ENCODE measurements at regions of chr2 and their contacts with region 1.

Region 1: GRCh38 chr2:148644883-148645538 is 460 bp downstream of the EPC2 start:
- DNase-seq: peak; percentile 92
- H3K4me3 ChIP-seq: peak overlapping the region; percentile 68 to 92
- H3K27ac ChIP-seq: peak overlapping the region; percentile 99 to 100
- H3K4me1 ChIP-seq: peaks cover 4% of the 10 kb centered on the region
- H3K27me3 ChIP-seq: no peaks in the 10 kb centered on the region
- CTCF ChIP-seq: peak in 2 of 4 experiments; percentile 60 to 64
- POLR2A ChIP-seq: no peak

Region 2: DNA sequence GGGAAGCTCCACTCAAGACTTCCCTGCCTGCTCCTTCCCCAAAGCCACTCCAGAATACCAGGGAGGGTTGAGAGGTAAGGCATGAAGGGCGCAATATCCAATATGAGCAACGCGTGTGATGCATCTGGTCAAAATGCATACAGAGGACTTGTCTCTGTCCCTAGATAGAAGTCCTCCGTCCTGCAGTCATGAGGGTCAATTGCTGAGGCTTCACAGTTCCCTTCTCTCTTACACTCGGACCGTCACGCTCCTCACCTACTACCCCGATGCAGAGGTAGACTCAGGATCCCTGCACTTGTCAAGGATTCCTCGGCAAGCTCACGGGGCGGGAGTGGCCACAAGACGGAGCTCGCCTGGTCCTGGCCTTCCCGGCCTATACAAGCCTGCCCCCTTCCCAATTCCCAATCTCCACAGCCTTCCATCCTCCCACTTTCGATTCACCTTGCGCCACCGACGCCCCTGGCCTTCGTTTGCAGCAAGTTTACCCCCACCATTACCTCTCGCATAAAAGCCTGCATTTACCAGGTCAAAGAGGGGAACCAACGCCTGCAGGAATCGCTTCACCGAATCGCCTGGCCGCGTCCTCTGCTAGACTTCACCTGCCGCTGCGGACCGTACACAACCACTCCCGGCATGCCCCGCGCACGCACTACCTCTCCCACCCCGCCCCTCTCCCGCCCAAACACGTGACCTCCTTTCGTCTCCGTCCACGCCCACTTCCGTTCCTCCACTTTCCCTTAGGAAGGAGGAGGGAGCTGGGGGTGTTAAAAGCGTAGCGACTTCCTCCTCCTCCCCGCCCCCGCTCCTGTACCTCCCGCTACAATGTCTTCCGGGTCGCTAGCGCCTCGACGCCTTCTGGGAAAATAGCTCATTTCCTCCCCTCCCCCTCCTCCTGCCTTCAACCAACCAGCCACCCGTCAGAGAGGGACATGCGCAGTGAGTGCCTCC is 624.6 kb before region 1 on chr2 and contains the start of gene ORC4:
- intact Hi-C with region 1: loop called (anchors 10 kb)
- DNase-seq: peak; percentile 100
- H3K4me3 ChIP-seq: peak within 1 kb of the TSS; percentile 62 to 79
- H3K27ac ChIP-seq: peak within 1 kb of the TSS; percentile 95
- H3K4me1 ChIP-seq: peaks cover 4% of the 10 kb centered on the region
- H3K27me3 ChIP-seq: no peaks in the 10 kb centered on the region
- CTCF ChIP-seq: peak in 3 of 4 experiments; percentile 36 to 48 (median 37)
- POLR2A ChIP-seq: peak; percentile 74
- total RNA-seq, gene ORC4: 62.0 to 88.3 TPM

Region 3: DNA sequence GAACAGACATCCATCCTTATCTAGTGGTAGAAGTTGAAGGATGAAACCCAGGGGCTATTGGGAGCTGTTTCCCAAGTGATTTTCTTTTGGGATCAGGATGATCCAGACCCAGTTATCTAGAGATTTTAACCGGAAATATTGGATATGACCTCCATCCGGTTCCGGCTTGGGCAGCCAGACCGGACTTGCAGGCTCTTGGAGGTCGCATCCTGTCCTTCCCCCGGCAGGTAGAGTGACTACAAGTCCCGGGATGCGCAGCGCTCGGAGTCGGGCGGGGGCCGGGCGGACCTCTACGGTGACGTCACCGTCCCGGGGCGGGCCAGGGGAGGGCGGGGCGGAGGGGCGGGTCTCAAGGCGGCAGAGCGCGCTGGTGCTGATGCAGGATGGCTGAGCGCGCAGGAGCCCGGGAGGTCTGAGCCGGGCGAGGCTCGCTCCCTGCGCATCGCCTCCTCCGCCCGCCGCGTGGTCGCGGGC is 229.9 kb after region 1 on chr2 and contains the start of gene KIF5C:
- intact Hi-C with region 1: loop called (anchors 10 kb)
- DNase-seq: peak; percentile 91
- H3K4me3 ChIP-seq: peak within 1 kb of the TSS; percentile 58 to 74
- H3K27ac ChIP-seq: peak within 1 kb of the TSS; percentile 86 to 93
- H3K4me1 ChIP-seq: no peaks in the 10 kb centered on the region
- H3K27me3 ChIP-seq: no peaks in the 10 kb centered on the region
- CTCF ChIP-seq: no peak
- POLR2A ChIP-seq: no peak
- total RNA-seq, gene KIF5C: 84.3 to 123 TPM